ENCODE measurements at regions of chr17 and their contacts with region 1.

Region 1: DNA sequence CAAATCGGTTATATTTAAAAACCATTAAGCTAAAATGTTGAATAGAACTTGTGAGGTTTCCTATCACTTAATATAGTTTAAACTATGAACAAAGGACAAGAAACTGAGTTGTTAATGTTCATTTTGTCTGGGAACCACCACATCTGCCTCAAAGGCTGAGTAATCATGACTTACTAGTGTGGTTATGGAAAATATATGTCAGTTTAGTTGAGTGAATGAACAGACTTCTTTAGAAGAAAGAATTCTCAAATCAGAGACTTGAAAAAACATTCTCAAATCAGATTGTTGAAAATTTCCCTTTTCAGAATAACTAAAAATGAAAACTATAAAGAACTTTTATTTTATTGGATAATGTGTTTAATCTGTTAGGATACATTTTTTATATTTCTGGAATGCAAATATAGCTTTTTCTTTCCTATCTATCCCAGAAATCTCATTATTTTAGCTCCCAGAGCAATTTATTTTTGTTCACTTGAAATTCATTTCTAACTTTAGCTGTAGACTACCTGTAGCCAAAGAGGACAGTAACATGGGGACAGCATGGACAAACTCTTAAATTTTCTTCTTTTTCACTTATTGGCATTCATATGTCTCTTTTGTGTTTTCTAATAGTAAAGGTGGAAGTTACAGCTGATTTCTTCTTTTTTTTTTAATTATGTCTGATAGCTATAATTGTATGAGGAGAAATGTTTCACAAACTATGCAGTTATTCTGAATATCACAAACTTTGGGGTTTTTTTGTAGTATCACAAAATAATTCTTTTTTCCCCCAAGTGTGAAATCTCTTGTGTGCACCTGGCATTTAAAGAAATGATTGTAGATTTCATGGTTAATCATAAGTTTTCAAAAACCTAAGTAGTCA is 55.3 kb downstream of the VMP1 start:
- DNase-seq: no peak
- H3K4me3 Mint-ChIP-seq: peak overlapping the region; percentile 40
- H3K27ac Mint-ChIP-seq: peak overlapping the region; percentile 86
- H3K4me1 Mint-ChIP-seq: peaks cover 60% of the 10 kb centered on the region
- H3K27me3 Mint-ChIP-seq: no peaks in the 10 kb centered on the region

Region 2: DNA sequence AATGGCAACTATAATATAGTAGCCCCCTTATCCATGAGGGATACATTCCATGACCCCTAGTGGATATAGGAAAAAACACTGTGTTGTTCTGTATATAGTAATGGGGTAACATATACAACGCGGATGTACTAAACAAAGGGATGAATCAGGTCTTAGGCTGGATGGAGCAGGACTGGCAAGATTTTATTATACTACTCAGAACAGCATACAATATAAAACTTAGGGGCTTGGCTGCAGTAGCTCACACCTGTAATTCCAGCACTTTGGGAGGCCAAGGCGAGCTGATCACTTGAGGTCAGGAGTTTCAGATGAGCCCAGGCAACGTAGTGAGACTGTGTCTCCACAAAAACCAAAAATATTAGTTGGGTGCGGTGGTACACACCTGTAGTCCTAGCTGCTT is 28.5 kb before region 1 on chr17:
- CTCF ChIA-PET with region 1: no interaction called
- POLR2A ChIA-PET with region 1: no interaction called
- DNase-seq: no peak
- H3K4me3 Mint-ChIP-seq: no peak overlapping the region
- H3K27ac Mint-ChIP-seq: no peak overlapping the region
- H3K4me1 Mint-ChIP-seq: peaks cover 11% of the 10 kb centered on the region
- H3K27me3 Mint-ChIP-seq: no peaks in the 10 kb centered on the region

Region 3: GRCh38 chr17:59775734-59776645 is 13.2 kb after region 1 on chr17:
- CTCF ChIA-PET with region 1: interaction called, 13 read pairs
- POLR2A ChIA-PET with region 1: interaction called, 3 read pairs
- DNase-seq: no peak
- H3K4me3 Mint-ChIP-seq: no peak overlapping the region
- H3K27ac Mint-ChIP-seq: no peak overlapping the region
- H3K4me1 Mint-ChIP-seq: peaks cover 37% of the 10 kb centered on the region
- H3K27me3 Mint-ChIP-seq: no peaks in the 10 kb centered on the region

Region 4: GRCh38 chr17:59837308-59838051 is 74.7 kb after region 1 on chr17:
- CTCF ChIA-PET with region 1: interaction called, 6 read pairs
- POLR2A ChIA-PET with region 1: interaction called, 10 read pairs
- DNase-seq: peak; percentile 91
- H3K4me3 Mint-ChIP-seq: peak overlapping the region; percentile 93
- H3K27ac Mint-ChIP-seq: peak overlapping the region; percentile 98
- H3K4me1 Mint-ChIP-seq: peaks cover 45% of the 10 kb centered on the region
- H3K27me3 Mint-ChIP-seq: no peaks in the 10 kb centered on the region